Transverse colon (tissue), 4 donors: ENCODE measurements at regions of chr2 and their contacts with region 1.

Region 1: DNA sequence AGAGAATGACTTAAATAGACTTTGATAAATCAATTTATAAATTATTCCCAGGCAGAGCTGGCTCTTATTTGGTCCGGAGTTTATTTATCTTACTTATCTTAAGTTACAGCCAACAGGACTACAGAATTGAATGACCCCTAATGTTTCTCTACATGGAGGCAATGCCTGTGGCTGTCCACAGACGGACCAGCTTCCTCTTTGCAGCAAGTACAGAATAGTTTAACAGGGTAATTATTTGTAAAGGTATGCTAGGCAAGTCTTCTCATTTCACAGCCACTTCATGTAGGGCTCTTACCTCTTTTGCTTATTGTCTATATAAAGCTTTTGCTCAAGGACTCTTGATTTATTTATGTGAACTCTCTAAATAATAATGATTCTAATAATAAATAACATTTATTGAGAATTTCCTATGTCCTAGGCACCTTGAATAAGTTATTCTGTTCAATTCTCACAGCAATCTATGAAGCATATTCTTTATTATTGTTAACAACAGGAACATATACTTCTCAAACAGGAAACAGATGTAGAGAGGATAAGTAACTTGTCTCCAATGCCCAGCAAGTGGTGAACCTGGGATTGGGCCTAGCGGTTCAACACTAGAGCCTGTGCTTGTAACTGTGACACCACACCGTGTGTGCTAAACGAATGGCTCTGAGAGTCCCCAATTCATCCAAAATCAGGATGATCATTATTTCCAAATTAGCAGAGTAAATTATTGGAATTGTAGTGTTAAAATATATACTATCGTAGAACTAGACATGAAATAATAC is 58.8 kb upstream of the NXPH2 start:
- DNase-seq: no peak
- H3K4me3 ChIP-seq: no peak overlapping the region
- H3K27ac ChIP-seq: no peak overlapping the region
- H3K4me1 ChIP-seq: no peaks in the 10 kb centered on the region
- H3K27me3 ChIP-seq: no peaks in the 10 kb centered on the region
- CTCF ChIP-seq: no peak
- EP300 ChIP-seq: no peak
- POLR2A ChIP-seq: no peak

Region 2: GRCh38 chr2:136858656-136859055 is 1980.4 kb before region 1 on chr2:
- in situ Hi-C with region 1: no loop called
- intact Hi-C with region 1: loop called (anchors 5 kb)
- DNase-seq: no peak
- H3K4me3 ChIP-seq: no peak overlapping the region
- H3K27ac ChIP-seq: no peak overlapping the region
- H3K4me1 ChIP-seq: no peaks in the 10 kb centered on the region
- H3K27me3 ChIP-seq: no peaks in the 10 kb centered on the region
- CTCF ChIP-seq: no peak
- EP300 ChIP-seq: no peak
- POLR2A ChIP-seq: no peak

Region 3: GRCh38 chr2:137659612-137660011 is 1179.4 kb before region 1 on chr2:
- in situ Hi-C with region 1: no loop called
- intact Hi-C with region 1: no loop called
- DNase-seq: peak; percentile 23
- H3K4me3 ChIP-seq: no peak overlapping the region
- H3K27ac ChIP-seq: no peak overlapping the region
- H3K4me1 ChIP-seq: no peaks in the 10 kb centered on the region
- H3K27me3 ChIP-seq: no peaks in the 10 kb centered on the region
- CTCF ChIP-seq: peak in 3 of 5 experiments; percentile 23 to 41 (median 28)
- EP300 ChIP-seq: no peak
- POLR2A ChIP-seq: no peak

Region 4: DNA sequence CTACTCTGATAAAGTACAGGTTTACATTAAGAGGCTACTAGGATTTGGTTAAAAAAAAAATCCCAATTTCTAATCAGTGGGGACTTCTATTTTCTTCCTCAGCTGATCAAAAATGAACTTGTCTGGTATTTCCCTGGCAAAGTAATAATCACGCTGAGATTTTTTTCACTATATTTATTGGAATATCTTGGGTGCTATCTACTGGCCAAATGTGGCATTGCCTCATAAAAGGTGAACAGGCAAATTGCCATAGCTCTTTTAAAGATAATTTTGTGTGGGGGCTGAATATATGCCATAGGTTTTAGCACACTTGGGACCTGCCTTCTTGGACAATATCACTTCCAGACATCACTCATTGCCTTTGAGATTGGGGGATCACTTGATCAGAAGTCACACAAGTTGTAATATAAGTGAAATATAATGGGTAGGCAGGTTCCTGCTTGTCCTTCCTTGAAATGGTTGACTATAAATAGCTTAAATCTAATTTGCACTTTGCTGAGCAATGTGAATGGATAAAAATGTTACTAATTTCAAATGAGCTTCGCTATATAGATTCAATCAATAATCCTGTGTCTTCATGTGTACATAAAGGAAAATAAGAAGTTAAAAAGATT is 51.9 kb before region 1 on chr2:
- in situ Hi-C with region 1: no loop called
- intact Hi-C with region 1: no loop called
- DNase-seq: no peak
- H3K4me3 ChIP-seq: no peak overlapping the region
- H3K27ac ChIP-seq: no peak overlapping the region
- H3K4me1 ChIP-seq: no peaks in the 10 kb centered on the region
- H3K27me3 ChIP-seq: peaks cover 11% of the 10 kb centered on the region
- CTCF ChIP-seq: peak; percentile 56 to 67 (median 62)
- EP300 ChIP-seq: no peak
- POLR2A ChIP-seq: no peak